Mammary epithelial cell (primary cell): ENCODE measurements at regions of chr18 and their contacts with region 1.

Region 1: DNA sequence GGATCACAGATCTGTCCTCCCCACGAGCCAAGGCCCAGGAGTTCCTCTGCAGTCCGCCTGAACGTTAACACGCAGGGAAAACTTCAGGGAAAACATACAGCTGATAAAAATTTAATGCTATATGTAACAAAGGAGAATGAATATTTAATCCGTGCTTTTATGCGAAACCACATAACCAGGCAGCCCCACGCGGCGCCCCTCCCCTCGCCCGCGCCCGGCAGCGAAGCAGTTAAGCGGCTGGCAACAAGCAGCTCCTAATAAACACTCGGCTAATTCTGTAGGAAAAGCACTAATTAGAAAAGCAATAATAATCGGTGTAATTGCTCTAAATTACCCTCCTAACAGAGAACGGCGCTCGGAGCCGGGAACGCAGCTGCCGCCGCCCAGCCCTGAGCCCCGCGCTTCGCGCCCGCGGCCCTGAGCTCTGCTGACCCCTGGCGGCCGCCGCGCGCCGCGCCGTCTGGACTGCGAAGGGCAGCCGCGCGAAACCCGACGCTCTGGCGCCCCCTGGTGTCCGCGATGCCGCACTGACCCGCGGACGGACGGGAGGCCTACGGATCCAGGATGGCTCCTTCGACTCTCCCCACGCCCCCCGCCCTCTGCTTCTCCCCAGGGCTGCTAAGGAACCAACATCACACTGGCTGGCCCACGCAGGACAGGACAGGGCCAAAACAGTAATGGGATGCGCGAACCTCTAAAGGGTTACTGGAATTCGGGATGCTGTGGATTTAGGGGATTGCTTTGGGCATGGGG is 181.4 kb downstream of the SMAD2 start:
- DNase-seq: peak; percentile 37
- H3K4me3 ChIP-seq: peak overlapping the region in 1 of 3 experiments; percentile 18
- H3K27ac ChIP-seq: no peak overlapping the region
- H3K4me1 ChIP-seq: no peaks in the 10 kb centered on the region
- H3K27me3 ChIP-seq: no peaks in the 10 kb centered on the region
- CTCF ChIP-seq: peak; percentile 87 to 97

Region 2: DNA sequence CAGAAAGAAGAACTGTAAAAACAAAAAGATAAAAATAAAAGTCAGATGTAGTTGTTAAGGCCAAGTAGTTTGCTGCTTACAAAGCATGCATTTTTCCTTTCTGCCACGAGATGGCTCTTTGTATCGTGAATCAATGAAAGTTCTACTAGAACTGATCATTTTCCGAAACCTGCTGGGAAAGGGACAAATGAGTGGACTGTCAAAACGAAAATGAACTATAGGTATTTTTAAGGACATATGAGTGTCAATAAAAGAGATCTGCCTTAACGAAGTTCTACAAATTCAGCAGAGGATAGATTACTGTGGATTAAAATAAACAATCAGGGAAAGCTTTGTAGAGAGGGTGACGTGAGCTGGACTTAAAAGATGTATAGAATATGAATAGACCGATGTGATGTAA is 698.6 kb before region 1 on chr18:
- CTCF ChIA-PET with region 1: no interaction called
- dilution Hi-C with region 1: no loop called
- in situ Hi-C with region 1: no loop called
- intact Hi-C with region 1: loop called (anchors 1 kb)
- DNase-seq: peak; percentile 27
- H3K4me3 ChIP-seq: no peak overlapping the region
- H3K27ac ChIP-seq: no peak overlapping the region
- H3K4me1 ChIP-seq: no peaks in the 10 kb centered on the region
- H3K27me3 ChIP-seq: peaks cover 3% of the 10 kb centered on the region
- CTCF ChIP-seq: peak; percentile 68 to 74

Region 3: GRCh38 chr18:47100214-47100831 is 648.7 kb before region 1 on chr18:
- CTCF ChIA-PET with region 1: no interaction called
- dilution Hi-C with region 1: no loop called
- in situ Hi-C with region 1: loop called in 1 of 2 experiments (anchors 10 kb)
- intact Hi-C with region 1: loop called (anchors 1 kb)
- DNase-seq: peak; percentile 52
- H3K4me3 ChIP-seq: no peak overlapping the region
- H3K27ac ChIP-seq: no peak overlapping the region
- H3K4me1 ChIP-seq: no peaks in the 10 kb centered on the region
- H3K27me3 ChIP-seq: no peaks in the 10 kb centered on the region
- CTCF ChIP-seq: peak; percentile 70 to 88

Region 4: DNA sequence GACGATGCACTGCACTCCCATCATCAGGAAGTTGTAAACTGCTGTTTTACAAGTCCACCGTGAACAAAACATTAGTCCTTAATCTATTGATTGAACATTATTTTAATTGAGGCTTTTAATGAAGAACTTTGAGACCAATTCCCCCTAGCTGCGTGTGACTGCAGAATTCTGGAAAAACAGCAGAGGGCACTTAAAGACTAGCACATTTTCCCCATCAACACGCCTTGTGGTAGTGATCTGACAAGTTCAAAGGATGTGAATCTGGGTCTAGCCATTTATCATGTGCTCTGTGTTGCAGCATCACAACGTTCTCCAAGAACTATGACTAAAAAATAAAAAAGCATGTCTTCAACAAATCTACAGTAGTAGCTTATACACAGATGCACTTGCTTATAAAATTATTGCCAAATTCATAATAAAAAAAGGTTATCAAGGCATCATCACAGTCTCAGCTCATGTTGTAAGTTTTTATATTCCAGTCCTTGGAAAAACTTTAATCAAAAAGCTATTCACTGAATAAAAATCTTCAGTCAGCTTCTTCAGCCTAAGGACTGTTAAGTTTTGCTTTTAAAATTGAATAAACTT is 533.4 kb before region 1 on chr18:
- CTCF ChIA-PET with region 1: no interaction called
- dilution Hi-C with region 1: no loop called
- in situ Hi-C with region 1: loop called (anchors 5 kb)
- intact Hi-C with region 1: loop called (anchors 1 kb)
- DNase-seq: peak; percentile 39
- H3K4me3 ChIP-seq: no peak overlapping the region
- H3K27ac ChIP-seq: no peak overlapping the region
- H3K4me1 ChIP-seq: no peaks in the 10 kb centered on the region
- H3K27me3 ChIP-seq: no peaks in the 10 kb centered on the region
- CTCF ChIP-seq: peak; percentile 63 to 81

Region 5: DNA sequence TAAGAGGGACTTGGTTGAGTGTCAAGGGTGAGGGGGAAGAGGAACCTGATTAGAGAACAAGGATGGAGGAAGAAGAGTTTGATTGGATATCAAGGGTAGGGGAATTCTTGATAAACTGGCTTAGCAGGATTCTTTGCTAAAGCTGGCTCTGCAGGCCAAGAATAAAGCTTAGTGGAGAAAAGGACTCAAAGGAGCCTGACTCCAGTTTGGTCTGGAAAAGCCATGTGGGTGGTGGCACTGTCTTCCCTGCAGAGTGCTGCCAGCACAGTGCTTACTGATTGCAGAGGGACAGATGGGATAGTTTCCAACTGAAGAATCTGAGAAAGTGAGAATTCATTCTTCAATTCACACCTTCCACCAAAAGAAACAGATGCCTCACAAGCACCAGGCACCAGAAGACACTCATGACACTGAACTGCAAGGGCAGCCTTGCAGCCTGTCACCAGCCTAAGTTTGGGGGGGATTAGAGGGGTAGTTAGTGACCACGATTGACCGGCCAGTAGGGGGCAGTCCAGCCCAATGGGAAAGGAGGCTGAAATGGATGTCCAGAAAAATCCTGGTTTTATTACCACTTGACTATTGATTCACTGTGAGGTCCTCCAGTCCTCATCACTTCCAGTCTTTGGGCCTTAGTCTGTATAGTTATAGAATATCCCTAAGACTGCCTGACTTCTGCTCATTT is 153.1 kb before region 1 on chr18:
- CTCF ChIA-PET with region 1: no interaction called
- dilution Hi-C with region 1: no loop called
- in situ Hi-C with region 1: no loop called
- intact Hi-C with region 1: loop called (anchors 1 kb)
- DNase-seq: no peak
- H3K4me3 ChIP-seq: no peak overlapping the region
- H3K27ac ChIP-seq: no peak overlapping the region
- H3K4me1 ChIP-seq: no peaks in the 10 kb centered on the region
- H3K27me3 ChIP-seq: peaks cover 12% of the 10 kb centered on the region
- CTCF ChIP-seq: peak; percentile 36 to 41

Region 6: DNA sequence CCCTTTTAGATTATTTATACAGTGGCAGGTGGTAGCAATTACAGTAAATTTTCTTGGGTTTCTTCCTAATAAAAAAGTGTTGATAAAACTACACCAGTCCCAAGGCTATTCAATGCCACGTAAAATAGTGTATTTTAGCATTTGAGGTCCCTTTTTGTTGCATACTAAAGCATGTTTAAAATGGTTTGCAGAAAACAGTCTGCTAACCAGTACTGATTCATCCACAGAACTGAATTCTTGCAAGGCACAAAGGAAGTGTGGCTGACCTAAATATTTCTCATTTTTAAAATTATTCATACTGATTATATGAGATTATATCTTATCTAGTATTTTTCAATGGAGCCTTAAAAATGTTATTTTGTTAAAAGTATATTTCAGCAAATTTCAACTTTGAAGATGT is 83.3 kb after region 1 on chr18:
- CTCF ChIA-PET with region 1: no interaction called
- dilution Hi-C with region 1: no loop called
- in situ Hi-C with region 1: no loop called
- intact Hi-C with region 1: no loop called
- DNase-seq: no peak
- H3K4me3 ChIP-seq: no peak overlapping the region
- H3K27ac ChIP-seq: no peak overlapping the region
- H3K4me1 ChIP-seq: no peaks in the 10 kb centered on the region
- H3K27me3 ChIP-seq: no peaks in the 10 kb centered on the region
- CTCF ChIP-seq: no peak